ENCODE measurements at regions of chr1 and their contacts with region 1.

Region 1: GRCh38 chr1:84853741-84854721 is 39.0 kb downstream of the LPAR3 start:
- DNase-seq: peak; percentile 61
- H3K4me3 Mint-ChIP-seq: peak overlapping the region; percentile 0
- H3K27ac Mint-ChIP-seq: peak overlapping the region; percentile 66
- H3K4me1 Mint-ChIP-seq: peaks cover 42% of the 10 kb centered on the region
- H3K27me3 Mint-ChIP-seq: peaks cover 1% of the 10 kb centered on the region

Region 2: DNA sequence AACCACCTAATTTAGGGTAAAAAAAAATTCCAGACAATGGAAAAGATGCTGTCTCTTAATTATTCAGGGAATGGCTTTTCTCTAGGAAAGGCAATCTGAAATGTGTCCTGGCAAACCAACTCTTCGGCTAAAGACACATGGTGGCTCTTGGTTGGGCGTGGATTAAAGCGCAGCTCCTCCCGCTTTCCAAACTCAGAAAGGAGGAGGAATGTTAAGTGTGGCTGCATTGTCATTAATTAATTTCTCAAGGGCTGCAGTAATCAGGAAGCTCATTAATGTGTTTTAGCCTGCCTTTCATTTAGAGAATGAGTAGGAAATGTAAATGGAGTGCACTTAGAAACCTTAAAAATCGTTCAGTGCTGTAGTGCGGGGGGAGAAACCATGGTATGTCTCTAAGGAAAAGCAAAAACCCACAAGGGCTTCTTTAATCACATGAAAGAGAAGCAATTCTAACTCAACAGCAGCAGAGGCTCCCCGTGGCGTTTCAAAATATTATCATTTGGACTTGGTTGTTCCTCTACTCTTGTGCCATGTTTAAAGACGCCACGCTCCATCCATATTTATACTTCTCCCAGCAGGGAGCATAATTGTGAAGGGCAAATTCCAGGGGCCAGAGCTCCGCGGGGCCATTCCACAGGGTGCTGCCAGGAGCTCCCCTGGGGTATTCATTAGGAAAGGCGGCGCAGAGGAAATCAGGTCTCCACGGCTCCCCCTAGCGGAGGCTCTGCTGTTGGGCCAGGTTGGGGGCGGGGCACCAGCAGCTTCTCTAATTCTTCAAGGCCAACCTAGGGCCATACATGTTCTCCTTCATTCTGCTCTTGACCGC is 71.9 kb before region 1 on chr1:
- intact Hi-C with region 1: loop called (anchors 5 kb)
- DNase-seq: peak; percentile 57
- H3K4me3 Mint-ChIP-seq: peak overlapping the region; percentile 71
- H3K27ac Mint-ChIP-seq: no peak overlapping the region
- H3K4me1 Mint-ChIP-seq: peaks cover 36% of the 10 kb centered on the region
- H3K27me3 Mint-ChIP-seq: peaks cover 3% of the 10 kb centered on the region

Region 3: GRCh38 chr1:84834419-84835064 is 19.5 kb before region 1 on chr1:
- intact Hi-C with region 1: loop called (anchors 2 kb)
- DNase-seq: no peak
- H3K4me3 Mint-ChIP-seq: no peak overlapping the region
- H3K27ac Mint-ChIP-seq: no peak overlapping the region
- H3K4me1 Mint-ChIP-seq: peaks cover 10% of the 10 kb centered on the region
- H3K27me3 Mint-ChIP-seq: peaks cover 3% of the 10 kb centered on the region

Region 4: DNA sequence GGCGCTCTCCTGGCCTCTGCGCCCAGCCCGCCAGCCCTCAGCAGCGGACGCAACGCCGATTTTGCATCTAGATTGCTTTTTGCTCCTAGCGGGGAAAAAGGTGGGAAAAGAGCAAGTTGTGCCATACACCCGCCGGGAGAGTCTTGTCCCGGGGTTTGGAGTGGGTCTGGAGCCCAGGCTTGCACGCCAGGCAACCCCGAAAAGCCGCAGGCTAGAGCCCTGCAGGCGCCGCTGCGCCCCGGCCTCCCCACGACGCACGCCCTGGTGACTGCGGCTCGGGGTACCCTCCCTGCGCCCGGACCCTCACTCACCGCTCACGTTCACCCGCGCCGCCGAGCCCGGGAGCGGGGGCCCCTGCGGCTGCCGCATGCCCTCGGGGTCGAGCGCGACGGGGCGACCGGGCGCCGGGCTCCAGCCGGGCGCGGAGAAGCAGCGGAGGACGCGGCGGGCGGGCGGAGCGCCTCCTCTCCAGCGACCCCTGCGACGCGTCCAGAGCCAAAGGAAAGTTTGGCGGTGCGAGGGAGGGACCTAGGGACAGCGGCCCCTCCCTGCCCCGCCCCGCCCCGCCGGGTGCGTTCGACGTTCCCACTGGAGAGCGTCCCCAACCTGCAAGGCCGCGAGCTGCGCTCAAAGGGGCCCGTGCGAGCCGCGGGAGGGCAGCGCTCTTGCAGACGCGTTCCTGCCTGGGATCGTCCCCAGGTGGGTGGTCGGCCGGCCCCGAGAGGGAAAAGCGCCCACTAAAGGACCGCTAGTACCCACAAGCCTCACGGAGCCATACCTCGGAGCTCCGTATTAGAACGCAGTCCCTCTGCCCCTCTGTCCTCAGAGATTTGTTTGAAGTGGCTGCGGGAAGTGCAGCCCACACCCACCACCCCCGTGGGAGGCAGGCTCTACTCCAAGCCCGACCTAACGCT is 38.9 kb after region 1 on chr1 and contains the start of gene LPAR3:
- intact Hi-C with region 1: loop called (anchors 5 kb)
- DNase-seq: no peak
- H3K4me3 Mint-ChIP-seq: peak within 1 kb of the TSS; percentile 81
- H3K27ac Mint-ChIP-seq: no peak within 1 kb of the TSS
- H3K4me1 Mint-ChIP-seq: peaks cover 30% of the 10 kb centered on the region
- H3K27me3 Mint-ChIP-seq: peaks cover 48% of the 10 kb centered on the region
- total RNA-seq, gene LPAR3: 0.34 and 0.47 TPM in 2 replicates

Region 5: DNA sequence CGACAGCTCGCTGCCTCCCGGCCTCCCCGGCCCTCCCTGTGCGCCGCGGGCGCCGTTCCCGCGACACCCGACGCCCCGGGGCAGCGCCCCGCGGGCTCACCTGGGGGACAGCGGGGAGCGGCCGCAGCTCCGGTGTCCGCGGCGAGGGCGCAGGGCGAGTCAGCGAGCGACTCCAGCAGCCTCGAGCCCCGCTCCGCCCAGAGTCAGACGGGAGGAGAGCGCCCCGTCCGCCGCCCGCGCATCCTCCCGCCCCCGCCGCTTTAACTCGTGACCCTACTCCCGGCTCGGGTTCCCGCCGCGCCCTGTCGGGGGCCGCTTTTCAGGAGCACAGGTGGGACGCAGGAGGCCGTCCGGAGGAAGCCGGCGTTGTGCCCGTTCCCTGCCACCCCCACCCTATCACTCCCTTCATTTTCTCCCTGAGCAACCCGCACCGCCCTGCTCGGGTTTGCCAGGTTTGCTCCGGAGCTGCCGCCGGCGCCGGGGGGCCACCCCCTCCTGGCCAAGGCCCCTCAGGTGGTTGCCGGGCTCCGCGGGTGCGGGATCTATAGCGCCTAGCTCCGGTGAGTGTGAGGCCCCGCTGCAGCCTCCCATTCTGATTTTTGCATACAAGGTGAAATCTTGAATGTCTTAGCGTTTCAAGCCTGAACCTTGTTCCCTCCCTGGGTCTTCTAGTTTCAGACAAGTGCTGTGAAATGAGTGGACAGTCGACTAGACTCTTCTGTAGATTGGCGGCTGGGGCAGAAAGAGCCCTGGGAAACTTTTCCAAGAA is 194.4 kb after region 1 on chr1 and contains the start of gene MCOLN3:
- intact Hi-C with region 1: no loop called
- DNase-seq: peak; percentile 28
- H3K4me3 Mint-ChIP-seq: peak within 1 kb of the TSS; percentile 83
- H3K27ac Mint-ChIP-seq: no peak within 1 kb of the TSS
- H3K4me1 Mint-ChIP-seq: peaks cover 37% of the 10 kb centered on the region
- H3K27me3 Mint-ChIP-seq: peaks cover 52% of the 10 kb centered on the region
- total RNA-seq, gene MCOLN3: 1.3 and 1.7 TPM in 2 replicates

Region 6: GRCh38 chr1:85297855-85298629 is 444.0 kb after region 1 on chr1:
- intact Hi-C with region 1: loop called (anchors 1 kb)
- DNase-seq: peak; percentile 62
- H3K4me3 Mint-ChIP-seq: peak overlapping the region; percentile 1
- H3K27ac Mint-ChIP-seq: peak overlapping the region; percentile 80
- H3K4me1 Mint-ChIP-seq: peaks cover 34% of the 10 kb centered on the region
- H3K27me3 Mint-ChIP-seq: peaks cover 47% of the 10 kb centered on the region

Measured in activated T-helper 1 cell treated with anti-CD3 and anti-CD28 coated beads, Interleukin-12 subunit alpha, Interleukin-12 subunit beta, Interleukin-2, Interleukin-4 antibody, amounts not matched to agents 30 ng/mL and 10 ng/mL and 1 ng/mL, durations not matched to agents 14 hours and 24 hours and 36 hours (primary cell).